Activated T-helper 2 cell treated with anti-CD3 and anti-CD28 coated beads, Interferon-gamma antibody, Interleukin-2, Interleukin-4, amounts not matched to agents 10 μg/mL and 5 μg/mL and 100 μg/mL, durations not matched to agents 14 hours and 24 hours and 36 hours (primary cell): ENCODE measurements at regions of chr15 and their contacts with region 1.

Region 1: DNA sequence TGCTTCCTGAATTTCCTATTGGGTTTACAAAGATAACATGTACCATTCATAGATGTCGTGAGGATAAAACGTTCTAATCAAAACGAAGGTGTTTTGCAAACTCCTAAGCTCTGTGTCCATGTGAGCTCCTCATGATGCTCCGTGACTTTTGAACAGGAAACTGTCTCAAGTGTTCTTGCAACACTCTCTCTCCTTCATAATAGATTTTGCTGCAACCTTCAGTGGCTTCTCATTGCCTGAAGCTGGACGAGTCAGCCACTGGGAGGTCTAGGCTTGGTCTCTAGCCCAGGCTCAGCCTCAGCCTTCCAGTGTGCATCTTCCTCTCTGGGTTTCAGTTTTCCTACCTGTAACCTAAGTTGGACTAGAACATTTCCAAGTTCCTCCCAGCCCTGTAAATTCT is 18.7 kb upstream of the BCL2A1 start:
- DNase-seq: no peak
- H3K4me3 Mint-ChIP-seq: no peak overlapping the region
- H3K27ac Mint-ChIP-seq: no peak overlapping the region
- H3K4me1 Mint-ChIP-seq: peaks cover 5% of the 10 kb centered on the region
- H3K27me3 Mint-ChIP-seq: peaks cover 2% of the 10 kb centered on the region

Region 2: GRCh38 chr15:79380755-79381497 is 608.8 kb before region 1 on chr15:
- intact Hi-C with region 1: loop called (anchors 10 kb)
- DNase-seq: peak; percentile 46
- H3K4me3 Mint-ChIP-seq: no peak overlapping the region
- H3K27ac Mint-ChIP-seq: no peak overlapping the region
- H3K4me1 Mint-ChIP-seq: peaks cover 3% of the 10 kb centered on the region
- H3K27me3 Mint-ChIP-seq: no peaks in the 10 kb centered on the region

Region 3: GRCh38 chr15:79769069-79769481 is 220.6 kb before region 1 on chr15:
- intact Hi-C with region 1: loop called (anchors 5 kb)
- DNase-seq: no peak
- H3K4me3 Mint-ChIP-seq: no peak overlapping the region
- H3K27ac Mint-ChIP-seq: no peak overlapping the region
- H3K4me1 Mint-ChIP-seq: no peaks in the 10 kb centered on the region
- H3K27me3 Mint-ChIP-seq: peaks cover 22% of the 10 kb centered on the region

Region 4: DNA sequence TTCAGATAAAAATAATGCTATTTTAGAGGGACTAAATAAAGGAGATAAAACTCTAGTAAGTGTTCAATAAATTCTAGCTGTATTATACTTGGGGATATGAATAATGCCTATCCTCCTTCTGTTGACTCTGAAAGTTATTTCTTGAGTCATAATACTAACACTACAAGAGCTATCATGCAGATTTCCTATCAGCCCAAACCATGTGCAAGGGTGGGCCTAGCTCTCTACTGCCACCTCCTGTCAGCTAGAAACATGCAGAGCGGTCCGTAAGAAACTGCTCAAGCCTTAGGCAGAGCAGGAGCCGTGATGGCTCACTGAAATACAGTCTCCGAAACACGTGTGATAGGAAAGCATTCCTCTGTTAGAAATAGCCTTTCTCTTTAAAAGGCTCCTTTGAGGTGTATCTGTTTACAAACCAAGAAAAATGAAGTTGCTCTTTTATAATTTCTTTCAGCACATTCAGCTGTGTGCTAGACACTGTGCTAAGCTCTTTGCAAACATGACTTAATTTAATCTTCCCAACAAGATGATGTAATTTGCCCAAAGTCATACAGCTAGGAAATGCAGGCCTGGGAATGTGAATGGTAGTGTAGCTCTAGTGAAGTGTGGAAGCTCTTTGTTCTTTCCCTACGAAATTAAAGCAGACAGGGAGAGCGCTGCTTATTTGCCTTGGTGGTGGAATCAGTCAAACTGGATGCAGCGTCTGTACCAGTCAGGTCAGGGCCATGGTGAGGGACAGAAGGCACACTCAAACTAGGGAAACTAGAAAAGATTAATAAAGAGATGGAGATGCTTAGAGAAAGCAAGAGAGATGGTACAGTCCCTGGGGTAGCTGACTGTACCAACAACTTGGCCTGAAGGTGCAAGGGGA is 136.0 kb before region 1 on chr15:
- intact Hi-C with region 1: loop called (anchors 1 kb)
- DNase-seq: peak; percentile 41
- H3K4me3 Mint-ChIP-seq: no peak overlapping the region
- H3K27ac Mint-ChIP-seq: no peak overlapping the region
- H3K4me1 Mint-ChIP-seq: peaks cover 13% of the 10 kb centered on the region
- H3K27me3 Mint-ChIP-seq: no peaks in the 10 kb centered on the region

Region 5: DNA sequence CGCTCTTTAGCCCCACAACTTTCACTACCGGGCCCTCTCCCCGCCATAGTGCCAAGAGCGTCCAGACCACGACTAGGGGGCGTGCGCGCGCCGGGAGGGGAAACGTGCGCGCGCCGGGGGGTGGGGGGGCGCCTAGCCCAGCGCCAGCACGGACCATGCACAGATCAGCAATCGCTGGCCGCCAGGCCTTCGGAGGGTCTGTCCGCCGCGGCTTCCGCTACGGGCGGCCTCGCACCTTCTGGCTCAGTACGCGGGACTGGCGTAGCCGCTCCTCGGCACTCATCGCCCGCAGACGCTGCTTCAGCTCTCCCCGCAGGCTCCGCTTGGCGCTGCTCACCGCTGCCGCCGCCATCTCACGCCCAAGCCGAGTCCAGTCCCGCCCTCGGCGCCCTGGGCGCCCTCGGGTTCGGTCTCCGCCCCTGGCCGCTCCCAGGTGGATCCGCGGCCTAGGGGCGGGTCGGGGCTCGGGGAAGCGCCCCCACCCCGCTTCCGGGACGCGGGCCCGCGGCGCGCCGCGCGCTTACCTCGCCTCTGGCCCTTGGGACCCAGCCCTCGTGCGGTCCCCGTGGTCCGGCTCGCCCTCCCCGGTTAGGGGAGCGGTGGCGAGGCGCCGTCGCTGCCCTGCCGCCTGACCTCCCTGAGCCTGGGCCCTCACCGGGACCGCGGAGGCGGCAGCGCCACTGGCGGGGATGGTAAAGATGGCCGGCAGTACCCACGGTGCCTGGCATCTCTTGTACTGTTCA is 92.9 kb before region 1 on chr15 and contains the start of gene MTHFS:
- intact Hi-C with region 1: loop called (anchors 1 kb)
- DNase-seq: peak; percentile 77
- H3K4me3 Mint-ChIP-seq: peak within 1 kb of the TSS; percentile 98
- H3K27ac Mint-ChIP-seq: peak within 1 kb of the TSS; percentile 99
- H3K4me1 Mint-ChIP-seq: peaks cover 47% of the 10 kb centered on the region
- H3K27me3 Mint-ChIP-seq: no peaks in the 10 kb centered on the region
- total RNA-seq, gene MTHFS: 33.3 and 34.6 TPM in 2 replicates

Region 6: DNA sequence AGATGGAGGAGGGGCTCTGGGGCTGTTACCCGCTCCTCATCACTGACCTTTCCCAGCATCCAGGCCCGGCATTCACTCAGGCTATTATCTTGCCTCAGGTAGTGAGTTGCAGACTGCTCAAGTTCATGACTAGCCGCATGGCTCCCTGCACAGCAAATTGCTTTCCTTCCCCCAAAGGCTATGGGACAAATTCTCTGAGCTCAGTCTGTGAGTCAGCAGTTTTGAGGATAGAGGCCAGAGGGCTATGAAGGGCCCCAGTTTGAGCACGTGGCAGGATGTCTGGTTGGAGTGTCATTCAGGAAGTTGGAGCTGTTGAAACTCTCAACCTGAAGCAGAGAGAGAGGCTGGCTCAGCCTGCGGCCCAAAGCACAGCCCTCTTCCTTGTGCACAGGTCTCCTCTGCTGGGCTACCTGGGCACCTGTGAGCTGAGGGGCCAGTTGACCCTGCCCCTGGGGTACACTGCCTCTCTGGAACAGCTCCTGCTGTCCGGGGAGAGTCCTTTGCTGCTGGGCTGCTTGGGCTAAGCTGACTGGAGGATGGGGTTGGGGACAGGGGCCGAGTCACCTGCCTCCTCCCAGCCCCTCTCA is 171.0 kb after region 1 on chr15:
- intact Hi-C with region 1: no loop called
- DNase-seq: peak; percentile 48
- H3K4me3 Mint-ChIP-seq: peak overlapping the region; percentile 5
- H3K27ac Mint-ChIP-seq: peak overlapping the region; percentile 86
- H3K4me1 Mint-ChIP-seq: peaks cover 26% of the 10 kb centered on the region
- H3K27me3 Mint-ChIP-seq: no peaks in the 10 kb centered on the region